Panc1 (cell line): ENCODE measurements at regions of chr20 and their contacts with region 1.

Region 1: DNA sequence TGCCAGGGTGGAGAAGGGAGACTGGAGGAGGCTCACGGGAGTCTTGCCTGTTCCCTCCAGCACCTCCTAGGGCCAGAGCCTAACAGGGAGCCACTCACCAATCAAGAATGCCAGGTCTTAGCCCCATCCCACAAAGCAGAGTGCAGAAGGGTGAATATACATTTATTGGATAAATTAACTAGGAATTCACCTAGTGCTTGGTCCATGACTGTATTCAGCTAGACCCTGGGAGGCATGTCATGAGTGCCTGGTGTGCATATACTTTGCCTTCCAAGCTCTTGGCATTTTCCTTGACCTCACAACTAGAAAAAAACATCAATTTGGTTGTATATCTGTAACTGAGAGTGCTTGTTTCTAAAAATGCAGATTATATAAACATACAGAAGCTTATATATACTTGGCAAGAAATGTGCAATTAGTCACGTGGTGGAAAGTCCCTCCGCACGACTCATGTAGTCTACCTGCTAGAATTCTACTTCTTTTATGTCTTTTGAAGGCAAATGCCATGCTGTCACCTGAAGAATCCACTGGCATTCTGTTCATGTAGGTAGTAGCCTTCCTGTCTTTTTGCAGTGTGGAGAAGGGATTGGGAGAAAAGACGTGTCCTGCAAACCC is 991.0 kb downstream of the KIF16B start:
- DNase-seq: no peak
- ATAC-seq: no peak
- H3K4me3 ChIP-seq: no peak overlapping the region
- H3K27ac ChIP-seq: no peak overlapping the region
- H3K4me1 ChIP-seq: no peaks in the 10 kb centered on the region
- H3K27me3 ChIP-seq: no peaks in the 10 kb centered on the region
- CTCF ChIP-seq: no peak

Region 2: DNA sequence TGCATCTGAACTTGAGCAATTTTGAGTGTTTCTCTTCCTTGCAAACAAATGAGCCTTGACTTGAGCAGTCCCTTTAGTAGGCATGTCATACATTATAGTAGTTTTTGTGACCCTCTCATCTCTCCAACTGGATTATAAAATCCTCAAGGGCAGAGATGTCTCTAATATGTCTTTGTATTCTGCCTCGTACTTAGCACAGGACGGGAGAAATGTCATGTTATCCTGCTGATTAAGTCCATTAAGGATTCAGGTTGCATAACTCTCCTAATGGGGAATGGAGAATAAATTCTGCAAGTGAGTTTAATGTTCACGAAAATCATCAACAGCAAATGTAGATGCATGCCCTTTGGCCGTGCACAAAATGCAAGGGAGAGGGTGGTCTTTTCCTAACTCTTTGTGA is 48.1 kb after region 1 on chr20:
- CTCF ChIA-PET with region 1: no interaction called
- POLR2A ChIA-PET with region 1: no interaction called
- in situ Hi-C with region 1: no loop called
- intact Hi-C with region 1: loop called (anchors 2 kb)
- DNase-seq: no peak
- ATAC-seq: no peak
- H3K4me3 ChIP-seq: no peak overlapping the region
- H3K27ac ChIP-seq: no peak overlapping the region
- H3K4me1 ChIP-seq: no peaks in the 10 kb centered on the region
- H3K27me3 ChIP-seq: no peaks in the 10 kb centered on the region
- CTCF ChIP-seq: no peak